Dendritic cell treated with granulocyte-macrophage colony-stimulating factor and Interleukin-4, amounts not matched to agents 40 ng/mL and 50 ng/mL, for 4 days (primary cell): ENCODE measurements at regions of chr1 and their contacts with region 1.

Region 1: DNA sequence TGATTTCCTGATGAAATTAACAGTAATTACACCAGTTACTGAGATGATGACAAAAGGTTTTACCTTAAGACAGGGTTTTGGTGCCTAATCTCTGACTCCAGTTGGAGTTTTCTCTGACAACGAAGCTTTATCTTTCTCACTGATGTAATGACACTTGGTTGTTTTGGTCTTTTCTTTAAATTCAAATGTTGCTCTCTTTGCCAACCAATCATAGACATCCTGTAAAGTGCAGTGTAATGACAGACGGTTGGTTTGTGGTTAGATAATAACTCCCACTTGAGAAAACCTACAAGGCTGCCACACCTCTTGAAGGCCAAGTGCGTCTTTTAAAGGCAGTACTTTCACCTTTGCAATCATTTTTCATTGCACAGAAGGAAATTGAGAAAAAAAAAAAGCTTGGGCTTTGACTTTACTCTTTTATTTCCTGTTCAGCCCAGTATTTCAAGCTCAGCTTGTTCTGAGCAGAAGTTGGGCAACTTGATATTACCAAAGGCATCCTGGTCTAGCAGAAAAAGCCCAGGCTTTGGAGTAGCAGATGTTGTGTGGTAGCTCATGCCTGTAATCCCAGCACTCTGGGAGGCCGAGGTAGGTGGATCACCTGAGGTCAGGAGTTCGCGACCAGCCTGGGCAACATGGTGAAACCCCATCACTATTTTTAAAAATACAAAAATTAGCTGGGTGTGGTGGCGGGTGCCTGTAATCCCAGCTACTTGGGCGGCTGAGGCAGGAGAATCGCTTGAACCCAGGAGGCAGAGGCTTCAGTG is 14.9 kb downstream of the PDIK1L start:
- H3K4me3 Mint-ChIP-seq: no peak overlapping the region
- H3K27ac Mint-ChIP-seq: peak overlapping the region; percentile 62
- H3K4me1 Mint-ChIP-seq: peaks cover 40% of the 10 kb centered on the region
- H3K27me3 Mint-ChIP-seq: no peaks in the 10 kb centered on the region

Region 2: GRCh38 chr1:26111530-26112406 is 14.7 kb before region 1 on chr1 and contains the start of gene PDIK1L:
- intact Hi-C with region 1: loop called (anchors 2 kb)
- H3K4me3 Mint-ChIP-seq: peak within 1 kb of the TSS; percentile 95
- H3K27ac Mint-ChIP-seq: peak within 1 kb of the TSS; percentile 88
- H3K4me1 Mint-ChIP-seq: peaks cover 10% of the 10 kb centered on the region
- H3K27me3 Mint-ChIP-seq: no peaks in the 10 kb centered on the region